Motor neuron (in vitro differentiated cells): ENCODE measurements at regions of chr9 and their contacts with region 1.

Region 1: GRCh38 chr9:98315551-98316060 is 60.2 kb upstream of the TBC1D2 start:
- ATAC-seq: peak; percentile 53 to 99 (median 66)
- H3K4me3 ChIP-seq: no peak overlapping the region
- H3K27ac ChIP-seq: no peak overlapping the region
- H3K4me1 ChIP-seq: peaks cover 25 to 26% of the 10 kb centered on the region in 2 donors

Region 2: DNA sequence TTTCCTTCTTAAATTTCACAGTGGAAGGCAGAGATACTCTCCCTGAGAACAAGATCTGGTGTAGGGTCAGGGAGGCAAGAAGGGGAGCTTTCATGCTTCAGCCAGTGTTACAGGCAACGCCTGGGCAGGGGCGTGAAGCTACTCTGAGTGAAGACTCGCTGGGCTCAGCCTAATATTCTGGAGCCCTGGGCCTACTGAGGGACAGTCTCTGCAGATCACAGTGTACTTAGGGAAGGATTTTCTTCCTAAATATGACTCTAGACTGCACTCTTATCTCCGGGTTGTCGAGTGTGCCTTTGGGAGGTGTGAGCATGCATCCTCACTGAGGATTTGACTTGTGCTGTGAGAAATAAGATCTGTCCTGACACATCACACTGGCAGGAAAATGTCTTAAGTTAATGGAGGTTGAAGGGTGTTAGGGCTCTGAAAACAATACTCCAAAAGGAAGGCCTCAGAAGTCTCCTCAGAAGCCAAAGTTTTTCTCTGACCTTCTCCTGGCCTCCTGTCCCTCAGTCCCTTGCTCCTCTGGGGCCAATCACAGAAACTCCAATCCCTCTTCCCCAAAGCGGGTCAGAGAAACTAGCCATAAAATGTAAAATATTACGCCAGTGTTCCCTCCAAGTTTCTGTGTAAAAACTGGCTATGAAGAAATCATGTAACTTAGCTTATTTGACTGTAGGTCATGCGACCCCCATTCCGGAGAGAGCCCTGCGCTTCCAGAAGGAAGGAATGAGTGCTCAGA is 96.7 kb after region 1 on chr9:
- in situ Hi-C with region 1: no loop called
- ATAC-seq: no peak
- H3K4me3 ChIP-seq: no peak overlapping the region
- H3K27ac ChIP-seq: no peak overlapping the region
- H3K4me1 ChIP-seq: no peaks in the 10 kb centered on the region

Region 3: DNA sequence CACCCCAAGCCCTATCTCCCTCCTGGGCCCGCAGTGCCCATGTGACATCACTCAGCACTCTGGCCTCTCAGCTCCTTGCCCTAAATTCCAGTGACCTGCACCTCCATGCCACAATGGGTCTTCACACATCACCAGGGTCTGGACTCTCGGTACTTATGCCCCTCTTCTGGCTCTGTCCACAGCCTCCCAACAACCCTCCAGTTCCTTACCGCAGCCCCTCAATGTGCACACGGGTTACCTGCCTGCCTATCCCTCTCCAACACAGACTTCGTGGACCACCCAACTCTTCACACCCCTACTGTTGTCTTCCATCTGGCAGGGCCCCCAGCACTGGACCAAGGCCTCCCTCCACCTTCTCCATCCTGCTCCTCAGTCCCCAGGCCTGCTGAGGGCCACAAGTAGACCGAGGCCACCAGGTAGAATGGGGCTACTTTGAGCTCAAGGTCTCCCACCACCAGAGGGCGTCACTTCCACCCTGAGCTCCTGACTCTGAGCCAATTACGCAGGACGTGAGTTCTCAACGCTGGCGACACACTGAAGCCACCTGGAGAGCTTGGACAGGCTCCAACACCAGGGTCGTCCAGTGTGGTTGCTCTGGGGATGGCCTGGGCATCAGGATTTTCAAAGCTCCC is 221.1 kb after region 1 on chr9:
- in situ Hi-C with region 1: loop called in 1 of 9 experiments (anchors 25 kb)
- ATAC-seq: no peak
- H3K4me3 ChIP-seq: no peak overlapping the region
- H3K27ac ChIP-seq: no peak overlapping the region
- H3K4me1 ChIP-seq: peaks cover 0 to 9% of the 10 kb centered on the region in 2 donors

Region 4: GRCh38 chr9:98642661-98643312 is 327.2 kb after region 1 on chr9:
- in situ Hi-C with region 1: loop called in 1 of 9 experiments (anchors 25 kb)
- ATAC-seq: no peak
- H3K4me3 ChIP-seq: no peak overlapping the region
- H3K27ac ChIP-seq: no peak overlapping the region
- H3K4me1 ChIP-seq: no peaks in the 10 kb centered on the region

Region 5: DNA sequence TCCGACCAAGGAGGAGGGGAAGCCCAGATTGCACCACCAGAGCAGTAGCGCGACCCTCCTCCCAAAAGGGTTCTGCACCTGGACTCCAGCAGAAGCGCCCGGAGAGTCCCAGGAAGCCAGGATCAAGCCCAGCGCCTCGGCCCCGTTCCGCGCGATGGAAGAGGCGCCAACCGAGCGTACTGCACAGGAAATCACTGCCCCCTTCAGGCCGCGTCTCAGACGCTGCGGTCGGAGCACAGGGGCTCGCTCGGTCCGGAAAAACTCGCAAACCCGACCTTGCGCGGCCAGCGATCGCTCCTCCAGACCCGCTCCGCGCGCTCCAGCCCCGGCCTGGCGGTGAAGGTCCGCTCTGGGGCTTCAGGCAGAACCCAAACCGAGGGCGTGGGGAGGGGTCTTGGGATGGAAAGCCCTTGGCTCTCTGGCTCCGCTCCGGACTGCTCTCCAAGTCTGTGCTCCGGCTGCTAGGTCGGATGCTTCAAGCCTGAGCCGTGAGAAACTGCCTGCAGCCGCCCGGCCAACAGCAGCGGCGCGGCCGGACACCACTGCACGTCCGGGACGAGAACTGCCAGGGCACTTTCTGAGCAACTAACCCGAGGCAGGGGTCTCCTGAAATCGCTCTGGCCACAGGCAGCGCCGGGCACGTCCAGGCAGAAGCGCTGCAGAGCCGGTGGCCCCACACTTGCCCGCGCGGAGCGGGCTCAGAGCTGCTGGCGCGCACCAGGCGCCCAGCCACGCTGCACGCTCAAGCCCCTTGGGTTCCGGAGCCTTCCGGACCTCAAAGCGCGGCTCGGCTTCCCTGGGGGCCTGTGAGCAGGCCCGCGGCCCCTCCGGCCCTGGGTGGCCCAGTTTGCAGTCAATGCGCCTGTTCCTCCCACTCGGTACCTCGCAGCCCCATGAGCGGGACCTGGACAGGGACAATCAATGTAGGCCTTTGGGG is 391.8 kb after region 1 on chr9:
- in situ Hi-C with region 1: loop called in 3 of 9 experiments (anchors 25 kb)
- ATAC-seq: peak; percentile 82 to 93 (median 86)
- H3K4me3 ChIP-seq: peak overlapping the region; percentile 50 to 80 (median 58)
- H3K27ac ChIP-seq: no peak overlapping the region
- H3K4me1 ChIP-seq: peaks cover 0 to 6% of the 10 kb centered on the region in 2 donors

Region 6: GRCh38 chr9:98775831-98776441 is 460.3 kb after region 1 on chr9:
- in situ Hi-C with region 1: loop called (anchors 10 to 25 kb)
- ATAC-seq: peak; percentile 45 to 83 (median 50)
- H3K4me3 ChIP-seq: no peak overlapping the region
- H3K27ac ChIP-seq: no peak overlapping the region
- H3K4me1 ChIP-seq: peaks cover 0 to 7% of the 10 kb centered on the region in 2 donors

Region 7: GRCh38 chr9:98796364-98797101 is 480.9 kb after region 1 on chr9 and contains the start of gene ANKS6:
- in situ Hi-C with region 1: loop called in 5 of 9 experiments (anchors 25 kb)
- ATAC-seq: peak; percentile 85 to 94 (median 92)
- H3K4me3 ChIP-seq: peak within 1 kb of the TSS; percentile 44 to 68 (median 61)
- H3K27ac ChIP-seq: no peak within 1 kb of the TSS
- H3K4me1 ChIP-seq: peaks cover 6 to 14% of the 10 kb centered on the region in 2 donors
- total RNA-seq, gene ANKS6: 2.8 to 28.4 (median 6.8) TPM